Spleen (tissue), 13 donors: ENCODE measurements at regions of chr9 and their contacts with region 1.

Region 1: DNA sequence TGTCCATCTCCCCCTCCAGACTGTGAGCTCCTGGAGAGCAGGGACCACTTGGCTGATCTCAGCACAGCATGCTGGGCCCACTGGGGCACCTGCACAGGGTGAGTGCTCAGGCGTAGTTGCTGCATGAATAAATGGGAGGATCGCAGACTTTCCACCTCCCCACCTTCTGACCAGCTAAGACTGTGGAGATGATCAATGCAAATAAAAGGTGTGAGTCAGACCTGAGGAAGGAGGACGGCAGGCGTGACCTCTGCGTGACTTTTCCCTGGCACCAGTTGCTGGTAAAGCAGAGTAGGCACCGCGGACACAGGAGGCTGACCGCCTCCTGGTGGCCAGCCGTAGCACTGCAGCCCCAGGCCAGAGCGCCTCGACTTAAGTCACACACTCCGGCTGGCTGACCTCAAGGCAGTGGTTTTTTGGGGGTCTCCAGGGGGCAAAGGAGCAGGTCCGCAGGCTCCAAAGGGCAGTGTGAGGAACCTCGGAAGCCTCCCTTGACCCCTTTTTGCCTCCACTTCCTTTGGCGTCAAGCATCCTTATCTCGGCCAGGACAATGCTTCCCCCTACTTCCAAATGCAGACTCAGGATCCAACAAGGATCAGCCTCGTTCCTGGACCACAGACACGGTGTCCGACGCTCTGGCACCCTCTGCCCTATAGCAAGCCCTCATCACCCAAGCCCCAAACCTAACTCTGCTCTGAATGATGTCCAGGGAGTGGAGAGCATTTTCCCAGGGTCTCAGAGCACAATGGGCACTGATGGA is 12.7 kb upstream of the TDRD7 start:
- DNase-seq: peak; percentile 92
- H3K4me3 ChIP-seq: no peak overlapping the region
- H3K27ac ChIP-seq: no peak overlapping the region
- H3K4me1 ChIP-seq: peaks cover 0 to 7% (median 6%) of the 10 kb centered on the region in 6 donors
- H3K27me3 ChIP-seq: no peaks in the 10 kb centered on the region
- CTCF ChIP-seq: peak; percentile 84 to 98 (median 95)
- POLR2A ChIP-seq: no peak

Region 2: DNA sequence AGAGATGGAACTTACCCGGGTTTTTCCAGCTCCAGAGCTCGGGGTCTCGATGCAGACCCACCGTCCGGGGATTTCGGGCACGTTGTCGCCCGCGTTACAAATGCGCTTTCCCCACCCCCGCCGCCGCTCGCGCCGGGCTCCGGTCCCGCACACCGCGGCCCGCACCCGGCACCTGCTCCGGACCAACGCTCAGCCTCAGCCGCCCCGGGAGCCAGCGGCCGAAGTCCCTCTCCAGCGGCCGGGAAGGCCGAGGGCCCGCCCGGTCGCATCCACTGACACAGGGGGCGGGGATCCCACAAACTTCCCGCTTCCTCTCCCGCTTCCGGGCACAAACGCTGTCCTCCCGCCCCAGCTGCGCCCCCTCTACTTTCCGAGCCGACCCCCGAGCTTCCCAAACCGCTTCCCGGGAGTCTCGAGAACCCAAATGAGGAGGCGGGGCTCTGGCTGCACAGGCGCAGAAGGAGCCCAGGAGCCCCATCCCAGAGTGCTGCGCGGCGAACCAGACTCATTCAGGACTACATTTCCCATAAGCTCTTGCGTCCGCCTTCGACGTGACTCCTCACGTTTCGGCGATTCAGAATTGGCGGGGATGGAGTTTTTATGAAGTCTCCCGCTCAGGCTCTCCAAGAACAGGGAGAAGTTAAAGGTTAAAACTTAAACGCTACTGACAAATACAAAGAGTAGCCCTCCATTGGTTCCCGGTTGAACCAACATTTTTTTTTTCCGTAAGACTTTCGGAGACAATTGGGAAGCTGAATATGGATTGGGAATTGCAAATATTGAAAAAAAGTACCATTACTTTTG is 544.9 kb before region 1 on chr9 and contains the start of gene ZNF782:
- intact Hi-C with region 1: loop called (anchors 5 kb)
- DNase-seq: peak; percentile 96
- H3K4me3 ChIP-seq: peak within 1 kb of the TSS; percentile 82 to 94 (median 93)
- H3K27ac ChIP-seq: peak within 1 kb of the TSS; percentile 58 to 89 (median 80)
- H3K4me1 ChIP-seq: peaks cover 12 to 45% (median 33%) of the 10 kb centered on the region in 6 donors
- H3K27me3 ChIP-seq: peaks cover 0 to 5% (median 0%) of the 10 kb centered on the region in 7 donors
- CTCF ChIP-seq: peak in 1 of 11 experiments; percentile 16
- POLR2A ChIP-seq: no peak
- total RNA-seq, gene ZNF782: 6.2 to 18.0 (median 8.2) TPM

Region 3: DNA sequence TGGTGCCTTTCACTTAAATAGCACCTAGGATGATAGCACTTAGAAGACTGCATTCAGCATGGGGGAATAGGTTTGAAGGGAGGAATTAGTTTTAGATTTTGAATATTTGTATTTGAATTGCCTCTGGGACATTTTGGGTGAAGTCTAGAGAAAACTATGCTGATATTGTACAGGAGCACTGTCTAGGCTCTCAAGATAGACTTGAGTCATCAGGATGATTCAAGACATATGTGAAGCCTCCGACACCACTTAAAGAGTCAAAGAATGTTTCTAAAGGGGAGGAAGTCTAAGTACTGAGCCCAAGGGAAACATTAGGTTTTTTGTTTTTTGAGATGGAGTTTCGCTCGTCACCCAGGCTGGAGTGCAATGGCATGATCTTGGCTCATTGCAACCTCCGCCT is 155.6 kb before region 1 on chr9:
- intact Hi-C with region 1: no loop called
- DNase-seq: no peak
- H3K4me3 ChIP-seq: no peak overlapping the region
- H3K27ac ChIP-seq: no peak overlapping the region
- H3K4me1 ChIP-seq: peaks cover 6 to 19% (median 10%) of the 10 kb centered on the region in 6 donors
- H3K27me3 ChIP-seq: no peaks in the 10 kb centered on the region
- CTCF ChIP-seq: no peak
- POLR2A ChIP-seq: no peak